Tibial artery (tissue), 4 donors: ENCODE measurements at regions of chr16 and their contacts with region 1.

Region 1: DNA sequence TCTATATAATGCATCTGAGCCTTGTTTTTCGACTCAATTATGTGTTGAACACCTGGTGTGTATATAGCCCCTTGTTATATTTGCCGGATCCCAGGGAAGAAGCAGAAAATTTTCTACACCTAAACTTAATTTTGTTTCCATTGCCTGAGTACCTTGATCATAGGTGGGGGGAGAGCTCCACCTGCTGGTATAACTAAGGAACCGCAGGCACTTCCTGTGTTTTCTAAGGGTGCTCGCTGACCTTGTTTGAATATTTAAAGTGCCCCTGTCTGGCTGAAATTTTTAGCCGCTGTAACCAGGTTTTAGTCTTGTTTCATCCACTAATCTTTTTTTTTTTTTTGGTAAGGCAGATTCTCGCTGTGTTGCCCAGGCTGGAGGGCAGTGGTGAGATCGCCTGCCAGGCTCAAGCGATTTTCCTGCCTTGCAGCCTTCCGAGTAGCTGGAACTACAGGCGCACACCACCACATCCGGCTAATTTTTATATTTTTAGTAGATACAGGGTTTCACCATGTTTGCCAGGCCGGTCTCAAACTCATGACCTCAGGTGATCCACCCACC is 6.5 kb upstream of the NUBP1 start:
- DNase-seq: peak in 1 of 2 donors; percentile 64
- H3K4me3 ChIP-seq: no peak overlapping the region
- H3K27ac ChIP-seq: peak overlapping the region; percentile 58 to 75
- H3K4me1 ChIP-seq: peaks cover 0 to 31% (median 16%) of the 10 kb centered on the region in 4 donors
- H3K27me3 ChIP-seq: no peaks in the 10 kb centered on the region
- CTCF ChIP-seq: peak; percentile 90 to 97

Region 2: DNA sequence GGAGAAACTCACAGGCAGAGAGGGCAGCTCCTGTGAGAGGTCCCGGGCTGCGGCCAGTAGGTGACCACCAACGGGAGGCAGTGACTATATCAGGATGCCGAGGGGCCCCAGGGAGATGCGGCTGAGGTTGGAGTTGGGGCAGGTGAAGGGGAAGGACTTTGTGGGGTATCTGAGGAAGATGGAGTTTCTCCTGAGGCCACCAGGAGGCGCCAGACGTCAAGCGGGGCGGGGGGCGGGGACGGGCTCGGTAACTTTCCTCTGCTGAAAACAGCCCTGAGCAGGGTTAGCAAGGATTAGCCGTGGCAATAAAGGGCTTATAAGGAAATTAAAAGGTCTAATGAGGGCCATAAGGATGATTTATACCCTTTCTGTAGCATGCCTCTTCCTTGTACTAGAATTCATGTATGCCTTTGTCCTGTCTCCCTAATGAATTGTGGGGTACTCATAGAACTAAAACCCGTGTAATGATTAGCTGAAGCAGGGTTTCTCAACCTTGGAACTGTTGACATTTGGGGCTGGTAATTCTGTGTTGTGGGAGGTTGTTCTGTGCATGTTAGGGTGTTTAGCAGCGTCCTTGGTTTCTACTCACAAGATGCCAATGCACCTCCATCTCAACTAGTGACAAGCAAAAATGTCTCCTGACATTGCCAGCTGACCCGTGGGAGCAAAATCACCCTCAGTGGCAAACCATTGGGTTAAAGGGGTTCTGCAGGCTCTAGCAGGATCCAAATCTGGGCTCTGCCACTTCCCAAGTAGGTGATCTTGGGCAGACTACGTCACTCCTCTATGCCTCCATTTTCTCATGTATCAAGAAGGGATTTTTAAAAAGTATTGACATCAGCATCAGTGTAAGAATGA is 480.1 kb before region 1 on chr16:
- intact Hi-C with region 1: loop called (anchors 10 kb)
- DNase-seq: no peak
- H3K4me3 ChIP-seq: no peak overlapping the region
- H3K27ac ChIP-seq: no peak overlapping the region
- H3K4me1 ChIP-seq: no peaks in the 10 kb centered on the region
- H3K27me3 ChIP-seq: peaks cover 0 to 25% of the 10 kb centered on the region in 2 donors
- CTCF ChIP-seq: peak; percentile 62 to 73

Region 3: DNA sequence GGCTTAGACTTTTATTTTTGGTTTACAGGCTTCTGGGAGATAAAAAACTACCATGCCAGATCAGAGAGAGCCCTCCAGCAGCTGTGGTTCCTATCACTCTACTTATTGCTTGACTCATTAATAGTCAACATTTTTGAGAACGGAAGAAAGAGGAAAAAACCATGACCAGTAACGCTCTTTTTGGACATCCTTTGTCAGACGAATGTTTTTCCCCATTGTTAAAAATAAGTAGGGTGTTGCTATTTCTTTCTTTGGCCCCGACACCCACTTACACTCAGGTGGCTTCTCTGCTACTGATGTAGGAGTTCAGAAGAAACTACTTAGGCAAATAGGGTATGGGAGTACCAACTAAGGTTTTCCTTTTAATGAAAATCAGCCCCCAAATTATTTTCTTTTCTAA is 53.9 kb after region 1 on chr16:
- intact Hi-C with region 1: no loop called
- DNase-seq: no peak
- H3K4me3 ChIP-seq: no peak overlapping the region
- H3K27ac ChIP-seq: no peak overlapping the region
- H3K4me1 ChIP-seq: no peaks in the 10 kb centered on the region
- H3K27me3 ChIP-seq: no peaks in the 10 kb centered on the region
- CTCF ChIP-seq: no peak